ENCODE measurements at regions of chr21 and their contacts with region 1.

Region 1: DNA sequence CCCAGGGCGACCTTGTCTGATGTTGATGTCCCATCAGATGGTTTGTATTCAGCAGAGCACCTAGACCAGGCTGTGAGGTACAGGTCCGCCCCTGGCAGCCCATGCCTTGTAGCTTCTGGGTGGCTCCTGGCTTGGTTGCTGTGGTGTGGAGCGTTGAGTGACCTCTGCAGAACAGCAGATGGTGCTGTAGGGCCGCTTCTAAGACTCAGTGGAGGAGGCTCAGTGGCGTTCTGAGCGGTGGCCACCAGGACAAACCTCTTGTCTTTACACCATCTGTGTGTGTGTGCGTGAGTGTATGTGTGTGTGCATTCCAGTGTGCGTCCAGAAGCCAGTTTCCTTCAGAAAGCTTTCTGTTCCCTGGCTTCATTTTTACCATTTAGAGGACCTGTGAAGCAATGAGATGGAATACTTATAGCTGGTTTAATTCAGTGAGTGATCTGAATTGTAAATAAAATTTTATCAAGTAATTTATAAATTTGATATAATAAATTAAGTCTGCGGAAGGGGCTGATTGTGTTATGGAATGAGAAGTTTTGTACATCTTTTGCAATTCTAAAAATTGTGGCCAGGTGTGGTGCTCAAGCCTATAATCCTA is 66.1 kb downstream of the ADARB1 start:
- DNase-seq: peak; percentile 79 to 89
- ATAC-seq: peak; percentile 97
- H3K4me3 ChIP-seq: no peak overlapping the region
- H3K27ac ChIP-seq: no peak overlapping the region
- H3K4me1 ChIP-seq: peaks cover 12% of the 10 kb centered on the region; the same call in 2 of the 3 replicates
- CTCF ChIP-seq: peak; percentile 66
- EP300 ChIP-seq: no peak
- POLR2A ChIP-seq: no peak
- RAD21 ChIP-seq: peak; percentile 83 to 86

Region 2: GRCh38 chr21:44965251-44966022 is 175.0 kb before region 1 on chr21:
- CTCF ChIA-PET with region 1: interaction called, 10 read pairs
- POLR2A ChIA-PET with region 1: no interaction called
- DNase-seq: no peak
- ATAC-seq: no peak
- H3K4me3 ChIP-seq: no peak overlapping the region
- H3K27ac ChIP-seq: no peak overlapping the region
- H3K4me1 ChIP-seq: peaks cover 17% of the 10 kb centered on the region
- CTCF ChIP-seq: no peak
- EP300 ChIP-seq: no peak
- POLR2A ChIP-seq: no peak
- RAD21 ChIP-seq: no peak

Region 3: GRCh38 chr21:45114072-45114471 is 26.4 kb before region 1 on chr21:
- CTCF ChIA-PET with region 1: interaction called, 16 read pairs
- POLR2A ChIA-PET with region 1: no interaction called
- DNase-seq: no peak
- ATAC-seq: no peak
- H3K4me3 ChIP-seq: no peak overlapping the region
- H3K27ac ChIP-seq: no peak overlapping the region
- H3K4me1 ChIP-seq: no peaks in the 10 kb centered on the region
- CTCF ChIP-seq: no peak
- EP300 ChIP-seq: no peak
- POLR2A ChIP-seq: no peak
- RAD21 ChIP-seq: no peak

Region 4: GRCh38 chr21:45161038-45161945 is 20.8 kb after region 1 on chr21:
- CTCF ChIA-PET with region 1: interaction called, 15 read pairs
- POLR2A ChIA-PET with region 1: no interaction called
- DNase-seq: no peak
- ATAC-seq: no peak
- H3K4me3 ChIP-seq: no peak overlapping the region
- H3K27ac ChIP-seq: no peak overlapping the region
- H3K4me1 ChIP-seq: no peaks in the 10 kb centered on the region
- CTCF ChIP-seq: no peak
- EP300 ChIP-seq: no peak
- POLR2A ChIP-seq: no peak
- RAD21 ChIP-seq: no peak

Region 5: DNA sequence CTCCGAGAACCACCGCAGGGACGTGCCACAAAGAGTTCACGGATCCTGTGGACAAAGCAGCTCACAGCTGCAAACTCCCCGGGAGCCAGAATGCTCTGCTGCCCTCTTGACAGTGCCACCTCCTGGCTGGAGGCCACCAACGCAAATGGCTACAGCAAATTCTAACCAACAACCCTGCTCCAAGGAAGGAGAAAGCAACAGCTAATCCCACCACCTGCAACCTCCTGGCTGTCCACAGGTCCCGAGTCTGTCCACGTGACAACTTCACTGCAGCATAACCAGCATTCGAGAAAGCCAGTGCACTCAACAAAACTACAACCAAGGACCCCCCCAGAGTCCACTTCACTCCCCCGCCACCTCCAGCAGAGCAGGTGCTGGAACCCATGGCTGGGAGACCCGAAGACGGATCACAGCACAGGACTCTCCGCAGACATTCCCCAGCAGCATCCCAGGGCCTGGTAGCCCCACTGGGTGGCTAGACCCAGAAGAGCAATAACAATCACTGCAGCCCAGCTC is 129.9 kb after region 1 on chr21:
- CTCF ChIA-PET with region 1: interaction called, 14 read pairs
- POLR2A ChIA-PET with region 1: no interaction called
- DNase-seq: peak in 1 of 2 experiments; percentile 31
- ATAC-seq: no peak
- H3K4me3 ChIP-seq: no peak overlapping the region
- H3K27ac ChIP-seq: no peak overlapping the region
- H3K4me1 ChIP-seq: no peaks in the 10 kb centered on the region
- CTCF ChIP-seq: no peak
- EP300 ChIP-seq: no peak
- POLR2A ChIP-seq: no peak
- RAD21 ChIP-seq: no peak

Region 6: GRCh38 chr21:45439161-45439872 is 298.9 kb after region 1 on chr21:
- CTCF ChIA-PET with region 1: interaction called, 31 read pairs
- POLR2A ChIA-PET with region 1: no interaction called
- DNase-seq: peak; percentile 58 to 78
- ATAC-seq: peak; percentile 69 to 91
- H3K4me3 ChIP-seq: no peak overlapping the region
- H3K27ac ChIP-seq: peak overlapping the region; percentile 64 to 84
- H3K4me1 ChIP-seq: peaks cover 16% of the 10 kb centered on the region
- CTCF ChIP-seq: peak; percentile 78
- EP300 ChIP-seq: no peak
- POLR2A ChIP-seq: no peak
- RAD21 ChIP-seq: peak; percentile 93 to 95

Measured in A549 (cell line).